H1 (cell line): ENCODE measurements at regions of chr2 and their contacts with region 1.

Region 1: DNA sequence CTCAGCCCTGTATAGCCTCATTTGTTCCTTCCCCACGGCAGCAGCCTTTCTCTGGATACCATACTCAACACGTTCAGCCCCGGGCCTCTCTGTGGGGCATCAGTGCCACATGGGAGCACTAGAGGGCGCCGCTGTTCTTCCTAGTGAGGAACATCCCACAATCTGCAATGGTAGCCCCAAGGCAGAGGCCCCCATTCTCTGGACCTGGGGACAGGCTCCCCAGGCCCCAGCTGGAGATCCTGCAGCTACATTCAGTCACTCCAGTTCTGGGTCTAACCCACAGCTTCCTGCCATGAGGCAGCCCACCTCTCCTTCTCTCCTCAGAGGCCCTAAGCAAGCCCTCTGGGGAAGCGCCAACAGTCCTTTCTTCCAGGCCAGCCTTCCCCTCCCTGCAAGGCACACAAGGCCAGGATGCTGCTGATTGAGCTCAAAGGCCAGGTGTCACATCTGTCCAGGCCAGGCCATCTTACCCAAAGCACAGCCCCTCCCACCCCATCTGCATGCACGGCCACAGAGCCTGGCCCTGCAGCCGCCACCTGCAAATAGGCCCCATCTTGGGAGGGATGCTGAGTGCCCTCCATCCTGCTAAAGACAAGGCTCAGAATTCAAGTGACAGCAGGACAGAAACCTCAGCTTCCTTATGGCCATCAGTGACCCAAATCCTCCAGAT is 14.3 kb upstream of the SFXN5 start:
- DNase-seq: peak; percentile 57 to 96
- H3K4me3 ChIP-seq: no peak overlapping the region
- H3K27ac ChIP-seq: no peak overlapping the region
- H3K4me1 ChIP-seq: peaks cover 0 to 9% (median 5%) of the 10 kb centered on the region in 4 experiments; a peak in 6 of 7 replicates
- H3K27me3 ChIP-seq: no peaks in the 10 kb centered on the region
- CTCF ChIP-seq: peak; percentile 94 to 95 (median 95)
- EP300 ChIP-seq: no peak
- POLR2A ChIP-seq: no peak
- RAD21 ChIP-seq: peak; percentile 97 to 98

Region 2: GRCh38 chr2:72993147-72993932 is 92.5 kb before region 1 on chr2:
- CTCF ChIA-PET with region 1: interaction called, 18 read pairs
- POLR2A ChIA-PET with region 1: no interaction called
- DNase-seq: peak in 1 of 2 experiments; percentile 82
- H3K4me3 ChIP-seq: no peak overlapping the region
- H3K27ac ChIP-seq: no peak overlapping the region
- H3K4me1 ChIP-seq: peaks cover 0 to 2% (median 0%) of the 10 kb centered on the region in 4 experiments; a peak in 3 of 7 replicates
- H3K27me3 ChIP-seq: no peaks in the 10 kb centered on the region; a peak in 3 of 7 replicates
- CTCF ChIP-seq: peak; percentile 62 to 81 (median 71)
- EP300 ChIP-seq: no peak
- POLR2A ChIP-seq: no peak
- RAD21 ChIP-seq: peak; percentile 69 to 74

Region 3: GRCh38 chr2:73072134-73072405 is 13.8 kb before region 1 on chr2:
- CTCF ChIA-PET with region 1: interaction called, 16 read pairs
- POLR2A ChIA-PET with region 1: interaction called, 3 read pairs
- DNase-seq: no peak
- H3K4me3 ChIP-seq: peak overlapping the region; percentile 63 to 86 (median 76)
- H3K27ac ChIP-seq: no peak overlapping the region
- H3K4me1 ChIP-seq: peaks cover 4 to 15% (median 7%) of the 10 kb centered on the region in 4 experiments; a peak in 6 of 7 replicates
- H3K27me3 ChIP-seq: peaks cover 0 to 4% (median 0%) of the 10 kb centered on the region in 4 experiments; a peak in 4 of 7 replicates
- CTCF ChIP-seq: no peak
- EP300 ChIP-seq: no peak
- POLR2A ChIP-seq: no peak
- RAD21 ChIP-seq: no peak

Region 4: GRCh38 chr2:73107211-73107926 is 21.5 kb after region 1 on chr2:
- CTCF ChIA-PET with region 1: interaction called, 63 read pairs
- POLR2A ChIA-PET with region 1: interaction called, 11 read pairs
- DNase-seq: no peak
- H3K4me3 ChIP-seq: no peak overlapping the region
- H3K27ac ChIP-seq: no peak overlapping the region
- H3K4me1 ChIP-seq: peaks cover 10 to 16% (median 15%) of the 10 kb centered on the region in 4 experiments; a peak in 6 of 7 replicates
- H3K27me3 ChIP-seq: no peaks in the 10 kb centered on the region; a peak in 1 of 7 replicates
- CTCF ChIP-seq: no peak
- EP300 ChIP-seq: no peak
- POLR2A ChIP-seq: no peak
- RAD21 ChIP-seq: no peak

Region 5: DNA sequence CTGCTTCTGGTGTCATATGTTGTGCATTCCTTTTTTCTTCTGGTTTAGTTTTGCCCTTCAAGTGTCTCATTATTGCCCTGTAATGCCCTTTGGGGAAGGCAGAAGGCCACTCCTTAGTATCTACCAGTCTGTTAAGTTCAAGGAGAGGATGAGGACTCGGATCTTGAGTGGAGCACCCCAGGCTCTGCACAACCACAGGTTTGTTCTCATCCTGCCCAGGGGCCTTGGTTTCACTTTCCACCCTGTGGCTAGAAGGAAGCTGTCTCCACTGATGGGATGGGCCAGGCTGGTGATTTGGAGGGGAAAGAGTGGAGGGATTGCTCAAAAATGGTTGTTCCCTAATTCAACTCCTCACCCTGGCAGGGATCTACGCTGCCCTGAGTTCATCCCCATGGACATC is 57.1 kb after region 1 on chr2:
- CTCF ChIA-PET with region 1: interaction called, 14 read pairs
- POLR2A ChIA-PET with region 1: no interaction called
- DNase-seq: no peak
- H3K4me3 ChIP-seq: no peak overlapping the region
- H3K27ac ChIP-seq: no peak overlapping the region
- H3K4me1 ChIP-seq: no peaks in the 10 kb centered on the region
- H3K27me3 ChIP-seq: peaks cover 0 to 3% (median 0%) of the 10 kb centered on the region in 4 experiments; a peak in 1 of 7 replicates
- CTCF ChIP-seq: no peak
- EP300 ChIP-seq: no peak
- POLR2A ChIP-seq: no peak
- RAD21 ChIP-seq: no peak

Region 6: GRCh38 chr2:73163483-73164367 is 77.9 kb after region 1 on chr2:
- CTCF ChIA-PET with region 1: interaction called, 321 read pairs
- POLR2A ChIA-PET with region 1: no interaction called
- DNase-seq: peak; percentile 63 to 92
- H3K4me3 ChIP-seq: no peak overlapping the region
- H3K27ac ChIP-seq: no peak overlapping the region
- H3K4me1 ChIP-seq: no peaks in the 10 kb centered on the region
- H3K27me3 ChIP-seq: no peaks in the 10 kb centered on the region
- CTCF ChIP-seq: peak; percentile 87 to 91 (median 89)
- EP300 ChIP-seq: no peak
- POLR2A ChIP-seq: no peak
- RAD21 ChIP-seq: peak; percentile 91

Region 7: GRCh38 chr2:73337828-73338227 is 252.0 kb after region 1 on chr2:
- CTCF ChIA-PET with region 1: no interaction called
- POLR2A ChIA-PET with region 1: no interaction called
- DNase-seq: no peak
- H3K4me3 ChIP-seq: no peak overlapping the region
- H3K27ac ChIP-seq: no peak overlapping the region
- H3K4me1 ChIP-seq: no peaks in the 10 kb centered on the region
- H3K27me3 ChIP-seq: no peaks in the 10 kb centered on the region
- CTCF ChIP-seq: no peak
- EP300 ChIP-seq: no peak
- POLR2A ChIP-seq: no peak
- RAD21 ChIP-seq: no peak

Region 8: DNA sequence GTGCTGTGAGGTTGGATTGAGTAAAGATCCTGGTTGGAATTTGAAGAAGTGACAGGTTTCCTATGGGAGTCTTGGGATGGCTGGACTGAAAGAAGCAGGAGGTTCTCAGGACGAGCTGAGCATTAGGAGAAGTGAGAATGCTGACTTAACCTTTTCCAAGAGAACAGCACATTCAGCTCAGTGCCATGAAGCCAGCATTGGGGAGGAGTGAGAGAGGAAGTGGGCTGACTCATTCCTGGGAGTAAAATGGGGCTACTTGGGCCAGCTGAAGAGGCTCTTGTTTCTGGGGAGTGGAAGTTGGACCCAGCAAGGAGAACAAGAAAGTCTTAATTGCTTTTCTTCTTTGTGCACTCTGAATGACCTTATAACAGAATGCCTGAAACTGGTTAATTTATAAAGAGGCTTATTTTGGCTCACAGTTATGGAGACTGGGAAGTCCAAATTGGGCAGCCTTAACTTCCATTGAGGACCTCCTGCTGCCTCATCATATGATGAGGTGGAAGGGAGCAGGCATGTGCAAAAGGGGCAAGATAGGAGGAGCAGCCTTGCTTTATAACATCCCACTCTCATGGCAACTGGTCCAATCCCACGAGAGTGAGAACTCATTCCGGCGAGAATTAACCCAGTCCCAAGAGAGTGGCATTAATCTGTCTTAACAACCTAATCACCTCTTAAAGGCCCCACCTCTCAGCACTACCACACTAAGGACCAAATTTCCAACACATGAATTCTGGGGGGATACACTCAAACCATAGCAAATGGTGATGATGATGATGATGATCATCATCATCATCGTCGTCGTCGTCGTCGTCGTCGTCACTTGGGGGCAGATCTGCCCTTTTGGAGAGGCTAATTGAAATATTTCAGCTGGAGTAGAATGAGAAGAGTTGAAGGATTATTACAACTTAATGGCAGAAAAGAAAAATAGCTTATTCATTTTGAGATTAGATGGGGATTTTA is 867.0 kb after region 1 on chr2:
- CTCF ChIA-PET with region 1: no interaction called
- POLR2A ChIA-PET with region 1: no interaction called
- DNase-seq: no peak
- H3K4me3 ChIP-seq: no peak overlapping the region
- H3K27ac ChIP-seq: no peak overlapping the region
- H3K4me1 ChIP-seq: no peaks in the 10 kb centered on the region
- H3K27me3 ChIP-seq: no peaks in the 10 kb centered on the region
- CTCF ChIP-seq: no peak
- EP300 ChIP-seq: no peak
- POLR2A ChIP-seq: no peak
- RAD21 ChIP-seq: no peak